ENCODE measurements at regions of chr2 and their contacts with region 1.

Region 1: DNA sequence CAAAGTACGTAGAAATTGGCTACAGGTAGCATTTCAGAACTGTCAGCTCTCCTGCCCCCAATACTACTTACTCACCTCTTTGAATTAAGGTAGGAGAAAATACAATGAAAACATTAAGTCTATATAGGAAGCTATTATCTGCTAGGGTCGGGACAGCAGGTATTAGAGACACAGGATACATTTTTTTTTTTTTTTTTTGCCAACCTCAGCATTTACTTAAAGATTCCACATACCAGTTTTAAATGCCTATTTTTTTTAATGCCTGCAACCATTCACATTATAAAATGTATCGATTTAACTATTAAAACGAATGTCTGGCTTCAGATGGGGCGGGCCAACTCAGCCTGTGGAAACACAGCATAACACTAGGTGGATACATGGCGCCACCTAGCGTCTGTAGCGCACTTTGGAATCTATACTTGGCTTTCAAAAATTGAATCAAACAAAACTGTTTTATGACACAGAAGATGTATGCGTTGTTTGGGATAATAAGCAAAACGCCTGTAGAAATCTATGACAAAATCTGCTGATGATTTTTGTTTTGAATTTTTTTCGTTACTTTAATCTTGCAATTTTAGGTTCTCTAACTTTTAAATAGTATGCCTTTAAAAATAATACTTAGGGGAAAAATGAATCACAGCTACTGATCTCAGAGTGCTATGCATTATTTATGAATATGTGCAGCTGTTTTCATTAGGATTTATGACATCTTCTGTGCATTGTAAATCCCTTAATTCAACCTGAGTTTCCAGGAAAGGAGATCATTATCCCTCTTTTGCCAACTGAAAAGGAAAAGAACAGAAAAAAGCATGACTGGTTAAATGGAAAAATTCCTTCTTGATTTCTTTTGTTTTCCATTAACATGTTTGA is 261.0 kb downstream of the NYAP2 start:
- DNase-seq: peak; percentile 82
- ATAC-seq: peak; percentile 77
- H3K4me3 Mint-ChIP-seq: no peak overlapping the region
- H3K27ac Mint-ChIP-seq: no peak overlapping the region
- H3K4me1 Mint-ChIP-seq: peaks cover 3% of the 10 kb centered on the region
- H3K27me3 Mint-ChIP-seq: peaks cover 18% of the 10 kb centered on the region

Region 2: GRCh38 chr2:225282858-225283710 is 377.4 kb before region 1 on chr2:
- CTCF ChIA-PET with region 1: interaction called, 36 read pairs
- DNase-seq: peak; percentile 44
- ATAC-seq: peak; percentile 63
- H3K4me3 Mint-ChIP-seq: no peak overlapping the region
- H3K27ac Mint-ChIP-seq: no peak overlapping the region
- H3K4me1 Mint-ChIP-seq: no peaks in the 10 kb centered on the region
- H3K27me3 Mint-ChIP-seq: no peaks in the 10 kb centered on the region

Region 3: GRCh38 chr2:225615527-225615926 is 45.0 kb before region 1 on chr2:
- CTCF ChIA-PET with region 1: no interaction called
- DNase-seq: no peak
- ATAC-seq: no peak
- H3K4me3 Mint-ChIP-seq: no peak overlapping the region
- H3K27ac Mint-ChIP-seq: no peak overlapping the region
- H3K4me1 Mint-ChIP-seq: no peaks in the 10 kb centered on the region
- H3K27me3 Mint-ChIP-seq: peaks cover 2% of the 10 kb centered on the region

Measured in activated CD8-positive, alpha-beta memory T cell treated with anti-CD3 and anti-CD28 coated beads, Interleukin-2, amount 10 ng/mL, durations not matched to agents 7 days and 5 days (primary cell).